Panc1 (cell line): ENCODE measurements at regions of chr17 and their contacts with region 1.

Region 1: DNA sequence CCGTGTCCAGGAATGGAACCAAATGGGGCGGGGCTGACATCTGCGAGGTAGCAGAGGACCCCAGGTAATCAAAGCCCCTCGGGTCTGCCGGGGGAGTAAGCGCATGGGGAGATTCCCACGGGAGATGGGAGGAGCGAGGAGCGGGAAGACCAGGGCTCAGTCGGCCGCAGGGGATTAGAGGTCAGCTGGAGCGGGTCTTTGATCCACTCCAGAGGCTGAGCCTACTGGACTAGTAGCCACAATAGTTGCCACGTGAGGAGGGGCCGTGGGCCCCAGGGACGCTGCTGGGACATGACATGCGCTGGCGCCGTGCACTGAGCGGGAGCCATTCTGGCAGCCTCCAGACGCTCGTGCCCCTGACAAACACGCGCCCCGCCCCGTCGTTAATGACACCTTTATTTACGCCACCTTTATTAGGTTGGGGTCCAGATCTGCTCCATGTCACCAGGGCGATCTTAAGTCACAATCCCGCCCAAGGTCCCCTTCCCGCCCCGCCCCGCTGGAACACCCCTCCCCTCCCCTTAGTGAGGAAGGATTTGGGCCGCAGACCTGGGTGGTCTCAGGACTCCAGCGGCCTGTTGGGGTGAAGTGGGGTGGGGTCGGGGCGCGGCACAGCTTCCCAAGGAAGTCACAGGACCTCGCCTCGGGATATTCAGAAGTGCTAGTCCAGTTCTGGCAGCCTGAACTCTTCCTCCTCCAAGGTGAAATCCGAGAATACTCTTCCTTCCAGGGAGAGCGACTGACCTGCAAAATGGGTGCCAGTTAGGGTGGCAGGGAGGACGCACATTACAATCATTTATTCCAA is 15.0 kb downstream of the PPY start:
- DNase-seq: no peak
- ATAC-seq: peak; percentile 53
- H3K4me3 ChIP-seq: peak overlapping the region; percentile 22 to 30
- H3K27ac ChIP-seq: no peak overlapping the region
- H3K4me1 ChIP-seq: no peaks in the 10 kb centered on the region; the same call in 1 of the 2 replicates
- H3K27me3 ChIP-seq: no peaks in the 10 kb centered on the region
- CTCF ChIP-seq: no peak

Region 2: DNA sequence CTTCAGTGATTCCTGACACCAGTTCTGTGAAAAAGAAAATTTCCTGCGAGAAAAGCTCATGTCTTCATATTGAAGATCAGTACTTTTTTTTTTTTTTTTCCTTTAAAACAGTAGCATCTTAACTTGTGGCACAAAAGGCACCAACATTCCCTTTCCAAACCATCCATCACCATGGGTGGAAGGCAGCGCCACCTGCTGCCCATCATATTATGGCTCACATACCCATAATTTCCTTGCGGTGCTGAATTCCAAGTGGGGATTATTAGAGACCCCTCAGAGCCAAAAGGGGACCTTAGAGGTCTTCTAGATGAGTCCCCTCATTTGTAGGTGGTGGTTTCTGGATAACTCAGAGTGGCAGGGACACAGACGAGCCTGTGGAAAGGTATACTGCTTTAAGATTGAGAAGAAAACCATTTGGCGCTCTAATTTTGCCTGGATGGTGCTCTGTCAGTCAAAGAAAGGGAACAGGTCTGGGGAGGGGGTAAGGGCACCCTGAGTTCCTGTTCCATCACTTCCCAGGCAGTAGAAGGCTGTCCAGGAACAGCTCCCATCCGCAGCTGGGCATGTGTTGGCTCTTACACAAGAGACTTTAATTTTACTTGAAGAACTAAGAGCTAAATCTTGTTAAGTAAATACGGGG is 160.7 kb before region 1 on chr17:
- CTCF ChIA-PET with region 1: no interaction called
- POLR2A ChIA-PET with region 1: no interaction called
- in situ Hi-C with region 1: no loop called
- intact Hi-C with region 1: no loop called
- DNase-seq: no peak
- ATAC-seq: peak; percentile 66; the same call in 1 of the 2 replicates
- H3K4me3 ChIP-seq: no peak overlapping the region
- H3K27ac ChIP-seq: no peak overlapping the region
- H3K4me1 ChIP-seq: no peaks in the 10 kb centered on the region
- H3K27me3 ChIP-seq: no peaks in the 10 kb centered on the region
- CTCF ChIP-seq: peak; percentile 86

Region 3: GRCh38 chr17:43832976-43833829 is 94.1 kb before region 1 on chr17 and contains the start of gene MPP3:
- CTCF ChIA-PET with region 1: no interaction called
- POLR2A ChIA-PET with region 1: no interaction called
- in situ Hi-C with region 1: no loop called
- intact Hi-C with region 1: no loop called
- DNase-seq: no peak
- ATAC-seq: peak; percentile 95
- H3K4me3 ChIP-seq: peak within 1 kb of the TSS; percentile 49 to 61
- H3K27ac ChIP-seq: no peak within 1 kb of the TSS
- H3K4me1 ChIP-seq: no peaks in the 10 kb centered on the region; the same call in 1 of the 2 replicates
- H3K27me3 ChIP-seq: no peaks in the 10 kb centered on the region
- CTCF ChIP-seq: no peak
- total RNA-seq, gene MPP3: 7.1 TPM

Region 4: GRCh38 chr17:43946069-43946696 is 18.9 kb after region 1 on chr17:
- CTCF ChIA-PET with region 1: no interaction called
- POLR2A ChIA-PET with region 1: interaction called, 20 read pairs
- in situ Hi-C with region 1: no loop called
- intact Hi-C with region 1: no loop called
- DNase-seq: no peak
- ATAC-seq: no peak
- H3K4me3 ChIP-seq: no peak overlapping the region
- H3K27ac ChIP-seq: no peak overlapping the region
- H3K4me1 ChIP-seq: no peaks in the 10 kb centered on the region
- H3K27me3 ChIP-seq: no peaks in the 10 kb centered on the region
- CTCF ChIP-seq: no peak

Region 5: DNA sequence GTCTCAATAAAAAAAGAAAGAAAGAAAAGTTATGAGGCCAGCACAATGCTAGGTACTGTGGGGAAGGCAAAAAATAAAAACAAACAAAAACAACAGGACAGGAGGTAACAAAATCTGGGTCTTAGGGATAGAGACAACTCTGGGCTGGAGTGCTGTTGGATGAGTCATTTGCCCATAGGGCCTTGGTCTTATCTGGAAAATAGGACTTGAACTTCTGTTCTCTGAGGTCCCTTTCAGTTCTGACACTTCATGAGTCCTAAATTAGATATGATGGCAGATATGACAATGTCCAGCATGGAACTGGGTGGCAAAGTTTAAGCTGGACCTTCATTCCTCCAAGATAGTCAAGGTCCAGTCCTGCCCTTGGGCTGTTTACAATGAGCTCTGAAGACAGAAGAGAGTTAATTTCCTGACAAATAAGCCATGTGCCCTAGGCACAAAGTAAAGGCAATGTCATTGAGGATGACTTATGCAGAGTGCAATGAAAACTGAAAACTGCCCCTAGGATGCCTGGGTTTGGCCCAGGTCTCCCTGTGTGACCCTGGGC is 205.1 kb after region 1 on chr17:
- CTCF ChIA-PET with region 1: no interaction called
- POLR2A ChIA-PET with region 1: no interaction called
- in situ Hi-C with region 1: no loop called
- intact Hi-C with region 1: no loop called
- DNase-seq: no peak
- ATAC-seq: peak; percentile 81
- H3K4me3 ChIP-seq: no peak overlapping the region
- H3K27ac ChIP-seq: no peak overlapping the region; the same call in 1 of the 2 replicates
- H3K4me1 ChIP-seq: peaks cover 3% of the 10 kb centered on the region; the same call in 1 of the 2 replicates
- H3K27me3 ChIP-seq: no peaks in the 10 kb centered on the region
- CTCF ChIP-seq: no peak

Region 6: GRCh38 chr17:44199553-44200477 is 272.6 kb after region 1 on chr17 and contains the start of gene ATXN7L3:
- CTCF ChIA-PET with region 1: no interaction called
- POLR2A ChIA-PET with region 1: no interaction called
- in situ Hi-C with region 1: no loop called
- intact Hi-C with region 1: no loop called
- DNase-seq: no peak
- ATAC-seq: peak; percentile 90
- H3K4me3 ChIP-seq: peak within 1 kb of the TSS; percentile 70 to 75
- H3K27ac ChIP-seq: peak within 1 kb of the TSS; percentile 95
- H3K4me1 ChIP-seq: peaks cover 14% of the 10 kb centered on the region
- H3K27me3 ChIP-seq: no peaks in the 10 kb centered on the region
- CTCF ChIP-seq: no peak
- total RNA-seq, gene ATXN7L3: 69.8 TPM